A549 (cell line): ENCODE measurements at regions of chr6 and their contacts with region 1.

Region 1: GRCh38 chr6:26342106-26343004 is 22.6 kb upstream of the BTN3A2 start:
- DNase-seq: peak in 1 of 2 experiments; percentile 27
- ATAC-seq: no peak; a peak in 1 of 6 replicates
- H3K4me3 ChIP-seq: peak overlapping the region; percentile 42
- H3K27ac ChIP-seq: peak overlapping the region; percentile 64 to 84
- H3K4me1 ChIP-seq: peaks cover 16% of the 10 kb centered on the region; the same call in 2 of the 3 replicates
- CTCF ChIP-seq: no peak
- EP300 ChIP-seq: no peak
- POLR2A ChIP-seq: no peak
- RAD21 ChIP-seq: no peak

Region 2: GRCh38 chr6:26249957-26250697 is 92.2 kb before region 1 on chr6:
- CTCF ChIA-PET with region 1: no interaction called
- POLR2A ChIA-PET with region 1: no interaction called
- DNase-seq: peak in 1 of 2 experiments; percentile 82
- ATAC-seq: peak; percentile 91 to 95
- H3K4me3 ChIP-seq: peak overlapping the region; percentile 49
- H3K27ac ChIP-seq: peak overlapping the region; percentile 84 to 91
- H3K4me1 ChIP-seq: no peaks in the 10 kb centered on the region
- CTCF ChIP-seq: no peak
- EP300 ChIP-seq: no peak
- POLR2A ChIP-seq: peak; percentile 63
- RAD21 ChIP-seq: no peak

Region 3: GRCh38 chr6:26383624-26384417 is 41.5 kb after region 1 on chr6:
- CTCF ChIA-PET with region 1: interaction called, 12 read pairs
- POLR2A ChIA-PET with region 1: no interaction called
- DNase-seq: peak in 1 of 2 experiments; percentile 27
- ATAC-seq: peak; percentile 53 to 61; a peak in 5 of 6 replicates
- H3K4me3 ChIP-seq: peak overlapping the region; percentile 57
- H3K27ac ChIP-seq: peak overlapping the region; percentile 73 to 91
- H3K4me1 ChIP-seq: peaks cover 18% of the 10 kb centered on the region
- CTCF ChIP-seq: no peak
- EP300 ChIP-seq: no peak
- POLR2A ChIP-seq: no peak
- RAD21 ChIP-seq: no peak

Region 4: GRCh38 chr6:26404546-26404945 is 62.2 kb after region 1 on chr6:
- CTCF ChIA-PET with region 1: interaction called, 17 read pairs
- POLR2A ChIA-PET with region 1: no interaction called
- DNase-seq: no peak
- ATAC-seq: no peak
- H3K4me3 ChIP-seq: no peak overlapping the region
- H3K27ac ChIP-seq: no peak overlapping the region
- H3K4me1 ChIP-seq: peaks cover 4% of the 10 kb centered on the region; the same call in 1 of the 3 replicates
- CTCF ChIP-seq: no peak
- EP300 ChIP-seq: no peak
- POLR2A ChIP-seq: no peak
- RAD21 ChIP-seq: no peak

Region 5: DNA sequence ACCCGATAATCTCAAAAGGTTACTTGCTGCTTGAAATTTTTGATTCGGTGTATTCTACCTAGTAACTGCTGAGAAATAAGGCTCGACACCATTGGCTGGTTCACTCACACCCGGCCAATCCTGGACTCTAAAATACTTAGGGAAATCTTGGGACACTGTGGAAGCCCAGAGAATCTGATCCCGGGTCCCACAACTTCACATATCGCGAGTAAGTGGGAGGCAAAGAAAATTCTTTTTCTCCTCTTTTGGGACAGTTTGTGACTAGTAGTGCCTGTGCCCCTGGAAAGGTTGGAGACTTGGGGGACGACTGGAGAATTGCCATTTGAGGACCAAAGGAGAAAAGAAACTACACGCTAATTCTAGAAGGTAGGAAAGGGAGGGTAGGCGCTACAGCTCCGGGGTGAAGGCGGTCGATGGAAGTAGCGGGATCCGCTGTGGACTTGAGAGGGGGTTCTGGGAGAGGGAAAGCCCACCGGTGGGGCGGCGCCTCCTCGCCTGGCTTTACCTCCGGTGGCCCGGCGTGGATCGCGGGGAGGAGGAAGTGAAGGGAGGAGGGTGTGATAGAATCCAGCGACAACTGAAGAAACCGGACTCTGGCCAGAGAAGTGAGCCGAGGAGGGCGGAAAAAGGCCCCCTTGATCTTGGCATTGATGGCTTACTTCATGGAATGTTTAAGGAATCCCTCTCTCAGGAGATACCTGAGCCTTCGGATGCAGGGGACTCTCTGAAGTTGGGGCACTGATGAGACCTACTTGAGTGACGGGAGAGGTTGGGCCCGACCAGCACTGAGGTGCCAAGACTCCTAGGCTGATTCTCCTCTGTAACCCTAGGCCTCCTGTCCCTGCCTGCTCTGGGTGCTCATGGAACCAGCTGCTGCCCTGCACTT is 79.1 kb after region 1 on chr6:
- CTCF ChIA-PET with region 1: interaction called, 12 read pairs
- POLR2A ChIA-PET with region 1: interaction called, 3 read pairs
- DNase-seq: peak; percentile 84 to 92
- ATAC-seq: peak; percentile 99 to 100
- H3K4me3 ChIP-seq: peak overlapping the region; percentile 56
- H3K27ac ChIP-seq: peak overlapping the region; percentile 69 to 96
- H3K4me1 ChIP-seq: peaks cover 10% of the 10 kb centered on the region; the same call in 2 of the 3 replicates
- CTCF ChIP-seq: no peak
- EP300 ChIP-seq: no peak
- POLR2A ChIP-seq: no peak
- RAD21 ChIP-seq: no peak

Region 6: DNA sequence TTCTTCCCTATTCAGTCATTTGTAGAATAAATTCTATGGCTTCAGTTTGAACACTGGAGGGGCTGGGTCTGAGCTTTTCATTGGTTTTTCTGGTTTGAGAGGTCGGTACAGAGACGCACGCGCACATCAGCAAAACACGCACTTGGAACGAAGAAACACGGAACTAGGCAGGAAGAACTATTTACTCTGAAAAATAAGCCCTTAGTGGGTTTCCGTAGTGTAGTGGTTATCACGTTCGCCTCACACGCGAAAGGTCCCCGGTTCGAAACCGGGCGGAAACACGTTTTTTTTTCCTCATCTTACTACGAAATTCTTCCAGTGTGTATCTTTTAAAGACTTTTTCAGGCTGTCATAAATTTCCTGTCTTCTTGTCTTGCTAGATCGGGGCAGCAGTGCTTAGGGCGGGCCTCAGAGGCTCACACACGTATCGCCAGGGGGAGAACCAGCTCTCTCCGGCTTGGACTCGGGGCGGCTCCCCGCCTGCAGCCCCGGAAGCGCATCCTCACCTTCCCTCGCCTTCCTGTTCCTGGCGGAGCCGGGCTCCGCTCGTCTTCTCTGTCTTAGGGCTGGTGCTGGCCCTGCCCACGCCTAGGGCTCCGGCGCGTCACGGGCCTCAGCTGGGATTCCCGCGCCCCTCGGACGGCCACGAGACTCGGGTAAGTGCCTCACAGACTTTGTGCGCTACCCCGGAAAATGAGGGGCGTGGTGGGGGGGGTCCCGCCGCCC is 195.7 kb after region 1 on chr6 and contains the start of gene HMGN4:
- CTCF ChIA-PET with region 1: interaction called, 20 read pairs
- POLR2A ChIA-PET with region 1: interaction called, 3 read pairs
- DNase-seq: peak in 1 of 2 experiments; percentile 90
- ATAC-seq: peak; percentile 85 to 89
- H3K4me3 ChIP-seq: peak within 1 kb of the TSS; percentile 97
- H3K27ac ChIP-seq: peak within 1 kb of the TSS; percentile 85 to 100
- H3K4me1 ChIP-seq: peaks cover 44% of the 10 kb centered on the region
- CTCF ChIP-seq: 0 out of 3 replicates have a peak, but pooled peaks have one; percentile 18
- EP300 ChIP-seq: no peak
- POLR2A ChIP-seq: peak; percentile 64
- RAD21 ChIP-seq: no peak; a peak in 1 of 5 replicates
- polyA plus RNA-seq, gene HMGN4: 59.0 and 62.9 TPM in 2 replicates

Region 7: DNA sequence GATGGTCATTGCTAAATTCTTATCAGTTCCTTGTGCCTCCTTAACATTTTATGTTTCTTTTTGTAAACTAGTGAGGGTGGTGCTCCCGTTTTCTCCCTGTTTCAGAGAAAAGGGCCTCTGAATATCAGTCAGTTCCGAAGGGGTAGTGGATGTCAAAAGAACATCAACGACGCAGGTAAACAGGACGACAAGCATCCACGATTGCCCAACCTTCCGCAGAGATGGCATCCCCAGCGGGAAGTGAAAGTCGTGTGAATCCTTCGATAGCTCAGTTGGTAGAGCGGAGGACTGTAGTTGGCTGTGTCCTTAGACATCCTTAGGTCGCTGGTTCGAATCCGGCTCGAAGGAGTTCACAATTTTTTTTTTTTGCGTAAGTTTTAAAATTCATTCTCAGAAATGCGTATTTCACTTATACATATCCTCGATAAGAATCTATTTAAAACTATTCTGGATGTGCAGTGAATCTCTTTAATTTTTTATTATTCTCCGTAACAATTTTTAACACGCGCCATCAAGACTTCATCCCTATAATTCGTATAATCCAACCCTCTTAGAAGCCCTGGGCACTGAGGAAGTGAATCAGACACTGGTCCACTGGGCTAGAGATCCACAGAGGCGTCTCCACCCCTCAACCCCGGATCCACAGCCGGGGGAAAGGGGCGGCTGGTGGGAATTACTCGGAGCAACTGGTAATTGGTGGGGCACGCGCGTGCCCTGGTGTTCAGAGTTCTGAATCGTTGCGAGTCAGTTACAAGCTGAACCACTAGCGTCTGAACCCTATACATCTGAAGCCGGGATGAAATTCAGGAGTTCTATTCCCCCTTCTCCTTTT is 226.5 kb after region 1 on chr6:
- CTCF ChIA-PET with region 1: interaction called, 27 read pairs
- POLR2A ChIA-PET with region 1: no interaction called
- DNase-seq: peak in 1 of 2 experiments; percentile 93
- ATAC-seq: peak; percentile 71 to 74
- H3K4me3 ChIP-seq: peak overlapping the region; percentile 66
- H3K27ac ChIP-seq: peak overlapping the region; percentile 53 to 86; a peak in 5 of 6 replicates
- H3K4me1 ChIP-seq: peaks cover 6% of the 10 kb centered on the region; the same call in 1 of the 3 replicates
- CTCF ChIP-seq: peak; percentile 41
- EP300 ChIP-seq: no peak
- POLR2A ChIP-seq: no peak
- RAD21 ChIP-seq: peak; percentile 61 to 68